ENCODE measurements at regions of chr2 and their contacts with region 1.

Region 1: DNA sequence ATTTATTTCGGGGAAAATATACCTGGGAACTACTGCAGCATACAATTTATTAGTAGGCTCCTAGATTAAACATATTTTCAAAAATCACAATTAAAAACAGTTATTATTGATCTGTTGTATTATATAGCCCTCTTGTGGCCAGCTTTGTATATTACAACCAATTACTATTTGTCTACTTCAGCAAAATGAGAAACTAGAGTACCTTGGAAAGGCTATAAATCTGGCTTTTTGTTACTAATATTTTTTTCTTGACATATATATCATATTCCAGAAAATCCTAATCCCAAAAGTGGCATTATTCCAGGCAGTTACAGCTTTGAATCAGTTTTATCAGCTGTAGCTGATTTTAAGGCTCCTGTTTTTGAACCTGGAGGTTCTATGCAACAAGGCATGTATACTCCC is 101.2 kb downstream of the UBR3 start:
- DNase-seq: no peak
- ATAC-seq: peak in 2 of 4 donors; percentile 62 to 64
- H3K4me3 ChIP-seq: no peak overlapping the region
- H3K27ac ChIP-seq: no peak overlapping the region
- H3K4me1 ChIP-seq: no peaks in the 10 kb centered on the region
- H3K27me3 ChIP-seq: no peaks in the 10 kb centered on the region
- CTCF ChIP-seq: peak; percentile 81

Region 2: GRCh38 chr2:169320561-169320960 is 607.9 kb before region 1 on chr2:
- intact Hi-C with region 1: no loop called
- DNase-seq: no peak
- ATAC-seq: no peak
- H3K4me3 ChIP-seq: no peak overlapping the region
- H3K27ac ChIP-seq: no peak overlapping the region
- H3K4me1 ChIP-seq: no peaks in the 10 kb centered on the region
- H3K27me3 ChIP-seq: peaks cover 0 to 3% (median 0%) of the 10 kb centered on the region in 3 donors
- CTCF ChIP-seq: no peak

Region 3: DNA sequence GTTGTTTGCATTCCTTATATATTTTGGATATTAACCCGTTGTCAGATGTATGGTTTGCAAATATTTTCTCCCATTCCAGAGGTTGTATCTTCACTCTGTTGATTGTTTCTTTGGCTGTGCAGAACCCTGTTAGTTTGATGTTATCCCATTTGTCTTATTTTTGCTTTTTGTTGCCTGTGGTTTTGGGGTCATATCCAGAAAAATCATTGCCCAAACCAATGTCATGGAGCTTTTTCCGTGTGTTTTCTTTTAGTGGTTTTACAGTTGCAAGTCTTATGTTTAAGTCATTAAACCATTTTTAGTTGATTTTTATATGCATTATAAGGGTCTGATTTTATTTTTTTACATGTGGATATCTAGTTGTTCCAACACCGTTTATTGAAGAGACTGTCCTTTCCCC is 308.5 kb before region 1 on chr2:
- intact Hi-C with region 1: loop called in 1 of 2 experiments (anchors 10 kb)
- DNase-seq: no peak
- ATAC-seq: no peak
- H3K4me3 ChIP-seq: no peak overlapping the region
- H3K27ac ChIP-seq: no peak overlapping the region
- H3K4me1 ChIP-seq: no peaks in the 10 kb centered on the region
- H3K27me3 ChIP-seq: no peaks in the 10 kb centered on the region
- CTCF ChIP-seq: no peak

Region 4: GRCh38 chr2:170155022-170155722 is 226.7 kb after region 1 on chr2:
- intact Hi-C with region 1: no loop called
- DNase-seq: no peak
- ATAC-seq: no peak
- H3K4me3 ChIP-seq: no peak overlapping the region
- H3K27ac ChIP-seq: no peak overlapping the region
- H3K4me1 ChIP-seq: no peaks in the 10 kb centered on the region
- H3K27me3 ChIP-seq: no peaks in the 10 kb centered on the region
- CTCF ChIP-seq: no peak

Region 5: GRCh38 chr2:170587922-170588321 is 659.5 kb after region 1 on chr2:
- intact Hi-C with region 1: no loop called
- DNase-seq: no peak
- ATAC-seq: no peak
- H3K4me3 ChIP-seq: no peak overlapping the region
- H3K27ac ChIP-seq: no peak overlapping the region
- H3K4me1 ChIP-seq: no peaks in the 10 kb centered on the region
- H3K27me3 ChIP-seq: no peaks in the 10 kb centered on the region
- CTCF ChIP-seq: no peak